ENCODE measurements at regions of chr10 and their contacts with region 1.

Region 1: GRCh38 chr10:94042001-94042833 is 48.5 kb downstream of the PLCE1 start:
- DNase-seq: peak; percentile 25
- H3K4me3 Mint-ChIP-seq: peak overlapping the region; percentile 33
- H3K27ac Mint-ChIP-seq: peak overlapping the region; percentile 17
- H3K4me1 Mint-ChIP-seq: peaks cover 13% of the 10 kb centered on the region
- H3K27me3 Mint-ChIP-seq: no peaks in the 10 kb centered on the region
- CTCF ChIP-seq: no peak

Region 2: DNA sequence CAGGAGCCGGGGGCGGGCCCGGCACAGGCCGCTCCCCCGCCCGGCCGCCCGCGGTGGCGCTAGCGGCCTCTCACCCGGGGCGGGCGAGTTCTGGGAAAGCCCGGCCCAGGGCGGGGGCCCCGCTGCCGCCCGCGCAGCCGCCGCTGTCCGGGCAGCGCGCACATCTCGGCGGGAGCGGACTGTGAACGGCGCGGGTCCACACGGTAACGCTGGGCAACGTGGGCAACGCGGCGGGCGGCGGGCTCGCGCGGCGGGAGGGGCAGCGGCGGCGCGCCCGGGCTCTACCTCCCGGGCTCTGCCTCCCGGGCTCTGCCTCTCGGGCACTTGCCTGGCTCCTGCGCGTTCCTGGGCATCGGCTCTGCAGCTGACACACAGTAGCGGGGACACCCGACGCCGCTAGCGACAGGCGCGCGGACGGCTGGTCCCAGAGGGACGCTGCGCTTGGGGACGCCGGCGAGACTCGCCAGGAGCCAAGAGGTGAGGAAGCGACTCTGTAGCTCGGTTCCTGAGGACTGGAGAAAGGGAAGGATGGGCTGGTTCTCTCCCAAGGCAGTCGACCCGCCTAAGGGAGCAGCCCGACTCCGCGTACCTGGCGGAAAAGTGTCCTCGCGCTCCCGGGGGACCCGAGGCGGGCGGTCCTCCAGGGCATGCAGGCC is 48.3 kb before region 1 on chr10 and contains the start of gene PLCE1:
- CTCF ChIA-PET with region 1: no interaction called
- intact Hi-C with region 1: loop called (anchors 5 kb)
- DNase-seq: peak; percentile 59
- H3K4me3 Mint-ChIP-seq: peak within 1 kb of the TSS; percentile 81
- H3K27ac Mint-ChIP-seq: peak within 1 kb of the TSS; percentile 5
- H3K4me1 Mint-ChIP-seq: peaks cover 37% of the 10 kb centered on the region
- H3K27me3 Mint-ChIP-seq: peaks cover 47% of the 10 kb centered on the region
- CTCF ChIP-seq: no peak
- total RNA-seq, gene PLCE1: 1.8 and 3.2 TPM in 2 replicates